ENCODE measurements at regions of chr1 and their contacts with region 1.

Region 1: DNA sequence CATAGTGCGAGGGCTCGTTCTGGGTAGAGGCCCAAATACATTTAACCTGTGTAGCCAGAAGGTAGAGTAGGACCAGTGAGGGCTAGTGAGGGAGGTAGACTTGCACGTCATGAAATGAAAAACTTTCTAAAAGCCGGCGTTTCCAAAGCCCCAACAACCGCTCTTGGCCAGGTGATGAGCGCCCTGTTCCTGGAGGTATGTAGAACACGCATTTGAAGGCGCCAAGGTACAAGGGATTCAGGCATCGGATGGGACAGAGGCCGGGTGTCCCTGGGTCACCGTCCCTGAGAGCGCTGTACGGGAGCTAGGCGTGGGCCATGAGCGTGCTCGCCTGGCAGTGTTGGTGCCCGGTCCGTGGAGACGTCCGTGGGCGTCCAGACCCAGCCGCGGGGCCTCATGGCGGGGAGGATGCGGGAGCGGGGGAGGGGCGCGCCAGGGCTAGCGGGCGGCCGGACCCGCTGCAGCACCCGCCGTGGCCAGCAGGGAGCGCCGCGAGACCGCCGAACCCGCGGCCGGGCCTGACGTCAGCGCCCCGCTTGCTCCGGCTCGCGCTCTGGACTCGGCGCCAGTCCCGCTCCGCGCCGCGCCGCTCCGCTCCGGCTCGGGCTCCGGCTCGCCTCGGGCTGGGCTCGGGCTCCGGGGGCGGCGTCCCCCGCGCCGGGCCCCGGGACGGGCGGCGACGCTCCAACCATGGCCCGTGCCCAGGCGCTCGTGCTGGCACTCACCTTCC is at the start of gene PTPRU:
- DNase-seq: peak; percentile 55 to 84
- H3K4me3 ChIP-seq: peak within 1 kb of the TSS; percentile 66
- H3K4me3 Mint-ChIP-seq: peak within 1 kb of the TSS; percentile 92
- H3K27ac Mint-ChIP-seq: peak within 1 kb of the TSS; percentile 82
- H3K4me1 ChIP-seq: peaks cover 26% of the 10 kb centered on the region
- H3K4me1 Mint-ChIP-seq: peaks cover 11% of the 10 kb centered on the region
- H3K27me3 ChIP-seq: no peaks in the 10 kb centered on the region
- H3K27me3 Mint-ChIP-seq: peaks cover 11% of the 10 kb centered on the region
- CTCF ChIP-seq: peak in 1 of 2 experiments; percentile 72
- total RNA-seq, gene PTPRU: 32.9 and 41.4 TPM in 2 replicates

Region 2: DNA sequence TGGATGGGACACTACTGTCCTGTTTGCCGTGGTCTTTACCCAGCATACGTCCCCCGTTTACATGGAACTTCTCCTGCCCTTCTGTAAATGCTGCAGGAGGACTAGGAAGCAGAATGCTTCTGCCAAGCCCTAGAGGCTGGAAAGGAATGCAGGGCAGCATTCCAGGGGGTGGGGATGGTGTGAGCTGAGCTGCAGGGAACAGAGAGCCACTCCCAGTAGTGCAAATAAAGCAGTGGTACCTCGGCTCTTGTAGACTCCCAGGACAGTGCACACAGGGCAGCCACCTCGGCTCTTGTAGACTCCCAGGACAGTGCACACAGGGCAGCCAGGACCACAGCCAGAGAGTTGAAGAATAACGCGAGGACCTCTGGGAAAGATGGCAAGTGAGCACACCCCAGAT is 35.6 kb after region 1 on chr1:
- CTCF ChIA-PET with region 1: no interaction called
- POLR2A ChIA-PET with region 1: interaction called, 5 read pairs
- intact Hi-C with region 1: loop called (anchors 2 kb)
- DNase-seq: peak; percentile 85 to 92
- H3K4me3 ChIP-seq: no peak overlapping the region
- H3K4me3 Mint-ChIP-seq: peak overlapping the region; percentile 70
- H3K27ac Mint-ChIP-seq: peak overlapping the region; percentile 98
- H3K4me1 ChIP-seq: peaks cover 23% of the 10 kb centered on the region
- H3K4me1 Mint-ChIP-seq: peaks cover 28% of the 10 kb centered on the region
- H3K27me3 ChIP-seq: no peaks in the 10 kb centered on the region
- H3K27me3 Mint-ChIP-seq: no peaks in the 10 kb centered on the region
- CTCF ChIP-seq: no peak

Region 3: DNA sequence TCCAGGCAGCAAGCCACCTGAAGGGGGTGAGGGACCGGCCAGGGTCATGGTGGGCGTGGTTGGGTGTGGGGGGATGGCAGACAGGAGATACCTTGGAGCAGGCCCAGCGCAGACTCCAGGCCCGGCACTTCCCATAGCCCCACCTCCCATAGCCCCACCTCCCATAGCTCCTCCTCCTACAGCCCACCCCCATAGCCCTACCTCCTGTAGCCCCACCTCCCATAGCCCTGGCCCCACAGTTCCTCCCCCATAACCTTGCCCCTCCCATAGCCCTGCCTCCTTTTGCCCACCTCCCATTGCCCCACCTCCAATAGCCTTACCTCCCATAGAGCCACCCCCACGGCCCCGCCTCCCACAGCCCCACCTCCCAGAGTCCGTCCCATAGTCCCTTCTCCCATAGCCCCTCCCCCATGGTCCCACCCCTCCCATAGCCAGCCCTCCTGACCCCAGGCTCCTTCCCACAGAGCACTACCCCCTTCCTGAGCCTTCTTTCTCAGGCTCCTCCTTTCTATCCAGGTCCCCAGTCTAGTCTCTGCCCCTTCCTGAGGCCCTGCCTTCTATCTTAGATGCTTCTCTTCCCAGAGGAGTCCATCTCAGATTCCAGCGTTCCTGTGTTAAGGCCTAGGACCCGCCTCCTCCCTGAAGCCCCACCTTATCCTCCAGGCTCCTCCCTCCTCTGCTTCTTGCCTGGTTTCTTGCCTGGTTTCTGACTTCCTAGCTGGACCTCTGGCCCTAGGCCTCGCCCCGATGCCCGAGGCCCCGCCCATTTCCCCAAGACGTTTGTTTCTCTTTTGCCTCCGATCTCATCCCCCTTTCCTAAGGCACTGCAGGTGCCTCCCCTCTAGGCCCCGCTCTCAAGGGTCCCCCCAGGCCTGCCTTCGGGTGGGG is 47.0 kb after region 1 on chr1:
- CTCF ChIA-PET with region 1: no interaction called
- POLR2A ChIA-PET with region 1: no interaction called
- intact Hi-C with region 1: no loop called
- DNase-seq: peak; percentile 70 to 92
- H3K4me3 ChIP-seq: no peak overlapping the region
- H3K4me3 Mint-ChIP-seq: peak overlapping the region; percentile 28
- H3K27ac Mint-ChIP-seq: no peak overlapping the region
- H3K4me1 ChIP-seq: peaks cover 7% of the 10 kb centered on the region
- H3K4me1 Mint-ChIP-seq: no peaks in the 10 kb centered on the region
- H3K27me3 ChIP-seq: no peaks in the 10 kb centered on the region
- H3K27me3 Mint-ChIP-seq: no peaks in the 10 kb centered on the region
- CTCF ChIP-seq: no peak

Region 4: GRCh38 chr1:29312469-29313466 is 76.6 kb after region 1 on chr1:
- CTCF ChIA-PET with region 1: no interaction called
- POLR2A ChIA-PET with region 1: no interaction called
- intact Hi-C with region 1: loop called (anchors 2 kb)
- DNase-seq: peak in 1 of 2 experiments; percentile 12
- H3K4me3 ChIP-seq: no peak overlapping the region
- H3K4me3 Mint-ChIP-seq: no peak overlapping the region
- H3K27ac Mint-ChIP-seq: no peak overlapping the region
- H3K4me1 ChIP-seq: no peaks in the 10 kb centered on the region
- H3K4me1 Mint-ChIP-seq: no peaks in the 10 kb centered on the region
- H3K27me3 ChIP-seq: no peaks in the 10 kb centered on the region
- H3K27me3 Mint-ChIP-seq: no peaks in the 10 kb centered on the region
- CTCF ChIP-seq: peak in 1 of 2 experiments; percentile 30

Region 5: GRCh38 chr1:29341936-29342335 is 105.8 kb after region 1 on chr1:
- CTCF ChIA-PET with region 1: no interaction called
- POLR2A ChIA-PET with region 1: no interaction called
- intact Hi-C with region 1: loop called (anchors 2 kb)
- DNase-seq: no peak
- H3K4me3 ChIP-seq: no peak overlapping the region
- H3K4me3 Mint-ChIP-seq: no peak overlapping the region
- H3K27ac Mint-ChIP-seq: no peak overlapping the region
- H3K4me1 ChIP-seq: no peaks in the 10 kb centered on the region
- H3K4me1 Mint-ChIP-seq: no peaks in the 10 kb centered on the region
- H3K27me3 ChIP-seq: no peaks in the 10 kb centered on the region
- H3K27me3 Mint-ChIP-seq: peaks cover 17% of the 10 kb centered on the region
- CTCF ChIP-seq: peak; percentile 11 to 15

Region 6: GRCh38 chr1:29410476-29410875 is 174.4 kb after region 1 on chr1:
- CTCF ChIA-PET with region 1: no interaction called
- POLR2A ChIA-PET with region 1: no interaction called
- intact Hi-C with region 1: loop called (anchors 5 kb)
- DNase-seq: no peak
- H3K4me3 ChIP-seq: no peak overlapping the region
- H3K4me3 Mint-ChIP-seq: no peak overlapping the region
- H3K27ac Mint-ChIP-seq: no peak overlapping the region
- H3K4me1 ChIP-seq: no peaks in the 10 kb centered on the region
- H3K4me1 Mint-ChIP-seq: peaks cover 5% of the 10 kb centered on the region
- H3K27me3 ChIP-seq: no peaks in the 10 kb centered on the region
- H3K27me3 Mint-ChIP-seq: peaks cover 5% of the 10 kb centered on the region
- CTCF ChIP-seq: no peak

Region 7: GRCh38 chr1:30111431-30111830 is 875.3 kb after region 1 on chr1:
- CTCF ChIA-PET with region 1: no interaction called
- POLR2A ChIA-PET with region 1: no interaction called
- intact Hi-C with region 1: loop called (anchors 5 kb)
- DNase-seq: peak; percentile 32 to 46
- H3K4me3 ChIP-seq: no peak overlapping the region
- H3K4me3 Mint-ChIP-seq: no peak overlapping the region
- H3K27ac Mint-ChIP-seq: no peak overlapping the region
- H3K4me1 ChIP-seq: no peaks in the 10 kb centered on the region
- H3K4me1 Mint-ChIP-seq: no peaks in the 10 kb centered on the region
- H3K27me3 ChIP-seq: no peaks in the 10 kb centered on the region
- H3K27me3 Mint-ChIP-seq: peaks cover 14% of the 10 kb centered on the region
- CTCF ChIP-seq: peak in 1 of 2 experiments; percentile 42